ENCODE measurements at regions of chr19 and their contacts with region 1.

Region 1: GRCh38 chr19:19224852-19225494 is 13.2 kb downstream of the NCAN start:
- DNase-seq: peak; percentile 60 to 89 (median 74)
- ATAC-seq: peak; percentile 97
- H3K4me3 ChIP-seq: peak overlapping the region; percentile 40
- H3K4me3 Mint-ChIP-seq: peak overlapping the region; percentile 67
- H3K27ac ChIP-seq: no peak overlapping the region
- H3K27ac Mint-ChIP-seq: no peak overlapping the region
- H3K4me1 ChIP-seq: peaks cover 11% of the 10 kb centered on the region
- H3K4me1 Mint-ChIP-seq: no peaks in the 10 kb centered on the region
- H3K27me3 ChIP-seq: peaks cover 7 to 9% of the 10 kb centered on the region in 2 experiments
- H3K27me3 Mint-ChIP-seq: peaks cover 22% of the 10 kb centered on the region
- CTCF ChIP-seq: peak; percentile 83

Region 2: GRCh38 chr19:18951665-18952281 is 273.2 kb before region 1 on chr19:
- CTCF ChIA-PET with region 1: no interaction called
- POLR2A ChIA-PET with region 1: no interaction called
- intact Hi-C with region 1: no loop called
- DNase-seq: no peak
- ATAC-seq: no peak
- H3K4me3 ChIP-seq: no peak overlapping the region
- H3K4me3 Mint-ChIP-seq: no peak overlapping the region
- H3K27ac ChIP-seq: no peak overlapping the region
- H3K27ac Mint-ChIP-seq: no peak overlapping the region
- H3K4me1 ChIP-seq: peaks cover 17% of the 10 kb centered on the region
- H3K4me1 Mint-ChIP-seq: no peaks in the 10 kb centered on the region
- H3K27me3 ChIP-seq: no peaks in the 10 kb centered on the region
- H3K27me3 Mint-ChIP-seq: peaks cover 5% of the 10 kb centered on the region
- CTCF ChIP-seq: no peak

Region 3: DNA sequence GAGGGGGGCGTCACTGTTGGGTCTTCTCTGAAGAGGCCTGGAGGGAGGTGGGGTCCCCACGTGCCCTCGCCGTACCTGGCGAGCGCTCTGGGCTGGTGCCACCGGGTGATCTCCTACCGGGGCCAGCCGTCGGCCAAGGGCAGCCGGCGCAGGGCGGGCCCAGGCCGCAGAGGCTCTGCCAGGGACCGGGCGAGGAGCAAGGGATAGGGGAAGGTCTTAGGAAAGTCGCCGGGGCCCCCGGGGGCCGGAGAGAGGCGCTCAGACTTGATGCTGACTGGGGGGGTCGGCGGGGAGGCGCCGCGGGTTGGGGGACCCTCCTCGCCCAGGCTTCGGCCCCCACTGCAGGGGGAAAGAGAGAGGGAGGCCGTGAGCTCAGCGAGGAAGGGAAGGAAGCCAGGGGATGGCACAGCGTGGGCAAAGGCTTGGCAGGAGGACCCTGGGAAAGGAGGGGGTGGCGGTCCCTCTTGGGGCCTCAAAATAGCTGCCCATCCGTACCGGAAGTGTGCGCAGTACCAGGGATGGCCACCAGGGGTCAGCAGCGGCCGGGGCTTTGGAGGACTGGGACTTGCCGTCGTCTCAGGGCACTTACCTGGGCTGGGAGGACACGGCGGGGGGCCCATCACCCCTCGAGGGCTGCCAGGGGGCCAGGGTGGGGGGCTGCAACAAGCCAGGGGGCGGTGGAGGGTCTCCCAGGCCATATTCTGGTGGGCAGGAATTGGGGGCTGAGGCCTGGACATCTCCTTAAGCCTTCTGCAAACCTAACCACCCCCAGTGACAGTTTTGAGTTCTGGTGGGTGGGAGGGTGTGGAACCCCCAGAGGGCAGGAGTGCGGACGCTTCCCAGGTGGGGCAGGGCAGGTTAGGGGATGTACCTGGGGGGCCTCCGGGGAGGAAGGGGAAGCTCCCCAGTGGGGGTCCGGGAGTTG is 79.0 kb before region 1 on chr19:
- CTCF ChIA-PET with region 1: interaction called, 15 read pairs
- POLR2A ChIA-PET with region 1: interaction called, 4 read pairs
- intact Hi-C with region 1: loop called (anchors 1 kb)
- DNase-seq: peak; percentile 72 to 91 (median 86)
- ATAC-seq: peak; percentile 98
- H3K4me3 ChIP-seq: no peak overlapping the region
- H3K4me3 Mint-ChIP-seq: no peak overlapping the region
- H3K27ac ChIP-seq: no peak overlapping the region
- H3K27ac Mint-ChIP-seq: no peak overlapping the region
- H3K4me1 ChIP-seq: peaks cover 8% of the 10 kb centered on the region
- H3K4me1 Mint-ChIP-seq: no peaks in the 10 kb centered on the region
- H3K27me3 ChIP-seq: no peaks in the 10 kb centered on the region
- H3K27me3 Mint-ChIP-seq: no peaks in the 10 kb centered on the region
- CTCF ChIP-seq: peak; percentile 79

Region 4: DNA sequence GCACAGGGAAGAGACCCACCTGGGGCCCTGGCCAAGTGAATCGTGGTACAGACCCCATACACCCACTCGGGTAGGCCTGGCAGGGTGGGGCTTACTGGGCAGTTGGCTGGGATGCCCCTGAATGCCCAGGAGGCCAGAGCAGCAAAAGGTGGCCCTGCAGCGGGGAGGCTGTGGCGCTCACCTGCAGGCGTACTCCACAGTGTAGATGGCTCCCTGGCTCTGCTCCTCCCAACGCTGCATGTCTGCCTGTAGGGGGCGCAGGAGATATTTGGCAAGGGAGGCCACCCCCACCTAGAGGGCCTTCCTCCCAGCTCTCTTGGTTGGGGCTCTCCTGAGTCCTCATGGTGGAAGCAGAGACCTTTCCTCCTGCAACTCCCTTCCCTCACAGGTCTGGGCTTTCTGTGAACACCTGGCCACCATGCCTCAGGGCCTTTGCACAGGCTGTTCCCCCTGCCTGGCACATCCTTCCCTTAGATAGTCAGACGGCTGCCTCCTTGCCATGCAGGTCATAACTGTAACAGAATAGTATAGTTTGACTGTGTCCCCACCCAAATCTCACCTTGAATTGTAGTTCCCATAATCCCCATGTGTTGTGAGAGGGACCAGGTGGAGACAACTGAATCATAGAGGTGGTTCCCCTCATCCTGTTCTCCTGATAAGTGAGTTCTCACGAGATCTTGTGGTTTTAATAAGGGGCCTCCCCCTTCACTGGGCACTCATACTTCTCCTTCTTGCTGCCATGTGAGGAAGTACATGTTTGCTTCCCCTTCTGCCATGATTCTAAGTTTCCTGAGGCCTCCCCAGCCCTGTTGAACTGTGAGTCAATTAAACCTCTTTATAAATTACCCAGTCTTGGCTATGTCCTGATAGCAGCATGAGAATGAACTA is 38.9 kb before region 1 on chr19:
- CTCF ChIA-PET with region 1: interaction called, 6 read pairs
- POLR2A ChIA-PET with region 1: no interaction called
- intact Hi-C with region 1: loop called (anchors 1 kb)
- DNase-seq: peak; percentile 43 to 81 (median 54)
- ATAC-seq: peak; percentile 90
- H3K4me3 ChIP-seq: no peak overlapping the region
- H3K4me3 Mint-ChIP-seq: peak overlapping the region; percentile 34
- H3K27ac ChIP-seq: no peak overlapping the region
- H3K27ac Mint-ChIP-seq: no peak overlapping the region
- H3K4me1 ChIP-seq: peaks cover 25% of the 10 kb centered on the region
- H3K4me1 Mint-ChIP-seq: peaks cover 29% of the 10 kb centered on the region
- H3K27me3 ChIP-seq: no peaks in the 10 kb centered on the region
- H3K27me3 Mint-ChIP-seq: no peaks in the 10 kb centered on the region
- CTCF ChIP-seq: peak; percentile 58

Region 5: GRCh38 chr19:19214892-19215291 is 10.1 kb before region 1 on chr19:
- CTCF ChIA-PET with region 1: no interaction called
- POLR2A ChIA-PET with region 1: no interaction called
- intact Hi-C with region 1: no loop called
- DNase-seq: peak in 6 of 14 experiments; percentile 10 to 49 (median 25)
- ATAC-seq: no peak
- H3K4me3 ChIP-seq: no peak overlapping the region
- H3K4me3 Mint-ChIP-seq: no peak overlapping the region
- H3K27ac ChIP-seq: no peak overlapping the region
- H3K27ac Mint-ChIP-seq: no peak overlapping the region
- H3K4me1 ChIP-seq: no peaks in the 10 kb centered on the region
- H3K4me1 Mint-ChIP-seq: peaks cover 4% of the 10 kb centered on the region
- H3K27me3 ChIP-seq: peaks cover 48 to 54% of the 10 kb centered on the region in 2 experiments
- H3K27me3 Mint-ChIP-seq: peaks cover 68% of the 10 kb centered on the region
- CTCF ChIP-seq: no peak